ENCODE measurements at regions of chr3 and their contacts with region 1.

Region 1: DNA sequence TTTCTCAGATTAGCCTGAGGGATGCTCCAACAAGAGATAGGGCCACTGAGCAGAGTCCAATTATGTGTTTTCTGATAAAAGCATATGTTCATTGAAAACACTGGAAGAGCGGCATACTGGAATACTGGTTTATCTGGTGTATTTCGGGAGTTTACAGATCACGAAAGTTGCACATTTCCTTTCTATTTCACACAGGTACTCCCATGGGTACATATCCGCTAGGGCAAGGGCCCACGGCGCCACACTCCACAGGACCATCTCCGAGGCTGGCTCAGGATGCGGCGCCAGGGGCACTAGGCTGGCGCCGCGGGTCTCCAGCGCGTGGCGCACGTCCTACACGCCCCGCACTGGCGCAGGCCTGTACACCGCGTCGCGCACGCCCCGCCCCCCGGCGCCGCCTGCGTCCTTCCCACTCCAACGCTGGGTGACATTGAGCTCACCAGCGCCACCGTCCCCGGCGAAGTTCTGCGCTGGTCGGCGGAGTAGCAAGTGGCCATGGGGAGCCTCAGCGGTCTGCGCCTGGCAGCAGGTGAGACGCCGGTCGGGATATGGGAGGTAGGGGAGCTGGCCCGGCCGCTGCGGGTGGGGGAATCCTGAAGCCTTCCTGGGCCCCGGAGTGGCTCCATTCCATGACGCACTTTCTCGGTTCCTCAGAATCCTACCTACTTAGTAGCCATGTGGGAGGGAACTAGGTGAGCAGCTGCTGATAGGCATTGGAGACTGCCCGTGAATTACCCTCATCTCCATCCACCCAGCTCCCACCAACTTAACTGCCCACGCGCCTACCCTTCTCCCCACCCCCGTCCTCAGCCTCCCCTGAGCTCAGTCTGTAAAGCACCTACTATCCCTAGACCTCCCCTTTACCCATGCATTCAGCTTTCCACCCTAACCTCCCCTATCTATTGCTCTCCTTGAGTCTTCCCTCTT is at the start of gene FAM162A:
- DNase-seq: peak; percentile 93
- CTCF ChIP-seq: peak; percentile 84

Region 2: GRCh38 chr3:122178711-122179110 is 205.3 kb before region 1 on chr3:
- CTCF ChIA-PET with region 1: no interaction called
- POLR2A ChIA-PET with region 1: no interaction called
- DNase-seq: no peak
- CTCF ChIP-seq: no peak

Region 3: GRCh38 chr3:122332551-122332950 is 51.5 kb before region 1 on chr3:
- CTCF ChIA-PET with region 1: no interaction called
- POLR2A ChIA-PET with region 1: no interaction called
- DNase-seq: no peak
- CTCF ChIP-seq: no peak

Region 4: DNA sequence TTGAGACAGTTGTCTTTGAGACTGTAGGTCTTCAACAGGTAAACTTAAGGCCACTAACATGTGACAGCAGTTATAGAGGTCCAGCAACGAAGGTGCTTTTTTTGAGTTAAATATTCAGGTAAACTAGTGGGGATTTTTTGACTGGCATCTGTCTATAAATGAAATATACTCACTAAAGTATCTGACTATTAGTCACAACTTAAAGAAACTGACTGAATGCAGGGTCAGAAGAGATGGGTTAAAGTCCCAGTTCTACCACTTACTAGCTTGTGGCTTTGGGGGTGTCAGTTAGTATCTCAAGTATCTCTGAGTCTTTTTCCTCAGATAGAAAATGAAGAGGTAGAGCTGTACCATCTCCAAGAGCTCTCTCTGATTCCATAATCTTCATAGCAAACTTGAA is 19.0 kb before region 1 on chr3:
- CTCF ChIA-PET with region 1: interaction called, 19 read pairs
- POLR2A ChIA-PET with region 1: interaction called, 3 read pairs
- DNase-seq: no peak
- CTCF ChIP-seq: no peak

Region 5: DNA sequence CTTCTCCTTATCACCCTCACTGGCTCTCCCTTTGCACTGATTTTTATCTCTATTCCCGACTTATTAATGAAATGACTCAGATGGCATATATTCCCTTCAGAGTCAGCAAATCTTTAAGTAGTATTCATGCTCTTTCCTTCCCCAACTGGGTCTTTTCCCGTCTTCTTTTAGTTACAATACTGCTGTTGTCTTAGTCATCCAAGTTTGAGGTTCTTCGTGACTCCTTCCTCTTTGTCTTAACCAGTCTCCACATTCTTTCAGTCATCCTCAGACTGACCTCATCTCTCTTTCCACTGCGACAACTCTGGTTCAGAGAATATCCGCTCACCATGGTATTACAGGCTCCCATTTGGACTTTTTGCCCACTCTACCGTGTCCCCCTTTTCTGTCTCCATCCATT is 19.5 kb after region 1 on chr3:
- CTCF ChIA-PET with region 1: interaction called, 82 read pairs
- POLR2A ChIA-PET with region 1: interaction called, 3 read pairs
- DNase-seq: no peak
- CTCF ChIP-seq: no peak

Region 6: DNA sequence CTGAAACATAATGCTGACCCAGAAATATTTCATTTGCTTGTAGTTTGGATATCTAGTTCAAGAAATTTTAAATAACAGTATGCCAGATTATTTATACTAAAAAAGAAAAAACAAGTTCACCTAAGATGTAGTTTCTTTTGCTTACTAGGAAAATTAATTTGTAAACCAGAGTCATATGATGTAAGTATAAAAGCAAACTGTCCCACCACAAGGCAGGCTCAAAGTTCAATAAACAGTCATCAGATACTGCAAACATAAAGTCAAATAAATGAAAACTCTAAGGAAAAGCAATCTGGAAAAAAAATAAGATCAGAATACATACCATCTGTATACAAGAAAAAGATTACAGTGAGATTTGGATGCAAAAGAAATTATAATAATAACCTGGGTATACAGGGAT is 72.0 kb after region 1 on chr3:
- CTCF ChIA-PET with region 1: no interaction called
- POLR2A ChIA-PET with region 1: no interaction called
- DNase-seq: no peak
- CTCF ChIP-seq: no peak

Measured in GM10248 (cell line).